Sigmoid colon (tissue), 7 donors: ENCODE measurements at regions of chr5 and their contacts with region 1.

Region 1: DNA sequence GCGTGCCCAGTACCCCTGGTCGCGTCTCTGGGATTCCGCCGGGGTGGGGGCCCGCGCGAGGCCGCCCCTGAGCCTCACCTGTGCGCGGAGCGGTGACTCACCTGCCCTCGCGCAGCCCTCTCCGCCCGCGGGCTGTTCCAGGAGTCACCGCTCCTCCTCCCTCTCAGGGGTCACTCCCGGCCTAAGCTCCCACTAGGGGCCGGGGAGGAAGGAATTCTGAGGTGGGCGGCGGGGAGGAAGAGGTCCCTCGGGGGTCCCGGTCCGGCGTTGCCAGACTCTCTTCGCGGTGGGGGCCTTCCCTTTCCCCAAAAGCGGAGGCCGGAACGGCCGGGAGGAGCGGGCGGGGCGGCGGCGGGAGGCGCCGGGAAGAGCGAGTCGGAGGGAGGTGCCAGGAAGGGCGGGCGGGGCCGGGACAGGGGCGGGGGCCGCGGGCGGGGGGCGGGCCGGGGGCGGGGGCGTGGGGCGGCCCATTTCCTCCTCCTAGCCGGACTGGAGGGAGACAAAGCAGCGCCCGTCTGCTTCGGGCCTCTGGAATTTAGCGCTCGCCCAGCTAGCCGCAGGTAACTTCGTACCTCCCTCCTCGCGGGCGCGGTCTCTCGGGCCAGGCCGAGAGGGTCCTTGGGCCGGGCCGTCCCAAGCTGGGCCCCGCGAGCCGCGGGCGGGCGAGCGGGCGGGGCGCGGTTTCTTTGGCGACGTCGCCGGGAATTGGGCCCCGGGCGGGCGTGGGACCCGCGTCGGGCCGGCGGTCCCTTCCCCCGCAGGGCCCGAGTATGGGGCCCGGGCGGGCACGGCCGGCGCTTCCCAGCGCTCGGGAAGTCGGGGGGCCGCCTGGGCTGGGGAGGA is at the start of gene CTNNA1:
- DNase-seq: peak; percentile 89
- H3K4me3 ChIP-seq: peak within 1 kb of the TSS; percentile 88 to 100 (median 94)
- H3K27ac ChIP-seq: peak within 1 kb of the TSS; percentile 99 to 100 (median 100)
- H3K4me1 ChIP-seq: peaks cover 0 to 33% (median 30%) of the 10 kb centered on the region in 4 donors
- H3K27me3 ChIP-seq: no peaks in the 10 kb centered on the region
- CTCF ChIP-seq: no peak
- EP300 ChIP-seq: peak in 1 of 4 donors; percentile 33
- POLR2A ChIP-seq: peak; percentile 11 to 17
- total RNA-seq, gene CTNNA1: 165 to 256 (median 194) TPM

Region 2: GRCh38 chr5:138331449-138332368 is 421.5 kb before region 1 on chr5 and contains the start of gene CDC25C:
- intact Hi-C with region 1: loop called (anchors 10 kb)
- DNase-seq: peak; percentile 99
- H3K4me3 ChIP-seq: peak within 1 kb of the TSS; percentile 0 to 49 (median 40)
- H3K27ac ChIP-seq: peak within 1 kb of the TSS in 2 of 4 donors; percentile 35 to 53
- H3K4me1 ChIP-seq: peaks cover 0 to 14% (median 12%) of the 10 kb centered on the region in 4 donors
- H3K27me3 ChIP-seq: no peaks in the 10 kb centered on the region
- CTCF ChIP-seq: no peak
- EP300 ChIP-seq: no peak
- POLR2A ChIP-seq: no peak
- total RNA-seq, gene CDC25C: 0.27 TPM in 1 of 4 donors, not detected in the others

Region 3: GRCh38 chr5:138632900-138633489 is 120.2 kb before region 1 on chr5:
- intact Hi-C with region 1: loop called (anchors 10 kb)
- DNase-seq: peak; percentile 80
- H3K4me3 ChIP-seq: no peak overlapping the region
- H3K27ac ChIP-seq: no peak overlapping the region
- H3K4me1 ChIP-seq: peaks cover 0 to 26% (median 19%) of the 10 kb centered on the region in 4 donors
- H3K27me3 ChIP-seq: no peaks in the 10 kb centered on the region
- CTCF ChIP-seq: peak in 1 of 4 experiments; percentile 19
- EP300 ChIP-seq: no peak
- POLR2A ChIP-seq: no peak

Region 4: GRCh38 chr5:138878437-138879235 is 125.5 kb after region 1 on chr5:
- intact Hi-C with region 1: no loop called
- DNase-seq: no peak
- H3K4me3 ChIP-seq: no peak overlapping the region
- H3K27ac ChIP-seq: no peak overlapping the region
- H3K4me1 ChIP-seq: peaks cover 0 to 34% (median 25%) of the 10 kb centered on the region in 4 donors
- H3K27me3 ChIP-seq: no peaks in the 10 kb centered on the region
- CTCF ChIP-seq: no peak
- EP300 ChIP-seq: no peak
- POLR2A ChIP-seq: no peak